H1 (cell line): ENCODE measurements at regions of chr13 and their contacts with region 1.

Region 1: GRCh38 chr13:51832471-51833152 is 12.4 kb downstream of the TMEM272 start:
- DNase-seq: no peak
- H3K4me3 ChIP-seq: no peak overlapping the region
- H3K27ac ChIP-seq: no peak overlapping the region
- H3K4me1 ChIP-seq: no peaks in the 10 kb centered on the region
- H3K27me3 ChIP-seq: no peaks in the 10 kb centered on the region
- CTCF ChIP-seq: peak; percentile 64 to 70 (median 67)
- EP300 ChIP-seq: no peak
- POLR2A ChIP-seq: no peak
- RAD21 ChIP-seq: peak; percentile 74 to 75

Region 2: DNA sequence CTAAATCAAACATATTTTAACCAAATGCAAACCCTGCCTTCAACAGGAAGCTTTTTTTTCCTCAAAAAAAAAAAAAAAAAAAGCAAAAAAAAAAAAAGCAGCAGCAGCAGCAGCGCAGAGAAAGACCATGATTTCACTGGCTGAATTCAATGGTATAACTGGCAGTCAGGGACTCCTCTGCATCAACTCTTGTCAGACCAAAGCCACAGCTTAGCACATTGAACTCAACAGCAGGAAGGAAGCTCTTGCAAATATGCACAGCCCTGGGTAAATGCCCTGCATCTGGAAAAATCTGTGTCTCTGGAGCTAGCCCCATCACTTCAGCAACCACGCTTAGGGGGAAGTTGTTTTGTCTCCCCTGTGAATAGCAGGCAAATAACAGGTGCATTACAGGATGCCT is 11.0 kb before region 1 on chr13:
- CTCF ChIA-PET with region 1: interaction called, 105 read pairs
- POLR2A ChIA-PET with region 1: interaction called, 4 read pairs
- DNase-seq: no peak
- H3K4me3 ChIP-seq: no peak overlapping the region
- H3K27ac ChIP-seq: no peak overlapping the region
- H3K4me1 ChIP-seq: peaks cover 0 to 13% (median 6%) of the 10 kb centered on the region in 4 experiments; a peak in 5 of 7 replicates
- H3K27me3 ChIP-seq: peaks cover 0 to 3% (median 1%) of the 10 kb centered on the region in 4 experiments; a peak in 2 of 7 replicates
- CTCF ChIP-seq: no peak
- EP300 ChIP-seq: no peak
- POLR2A ChIP-seq: no peak
- RAD21 ChIP-seq: no peak